GM23248 (cell line): ENCODE measurements at regions of chr2 and their contacts with region 1.

Region 1: GRCh38 chr2:42663106-42663780 is 94.8 kb downstream of the MTA3 start:
- DNase-seq: peak; percentile 83
- H3K4me3 ChIP-seq: no peak overlapping the region
- H3K27ac ChIP-seq: no peak overlapping the region
- H3K4me1 ChIP-seq: no peaks in the 10 kb centered on the region
- H3K27me3 ChIP-seq: no peaks in the 10 kb centered on the region

Region 2: GRCh38 chr2:42503291-42503690 is 160.0 kb before region 1 on chr2:
- in situ Hi-C with region 1: loop called (anchors 10 kb)
- DNase-seq: no peak
- H3K4me3 ChIP-seq: no peak overlapping the region
- H3K27ac ChIP-seq: no peak overlapping the region
- H3K4me1 ChIP-seq: no peaks in the 10 kb centered on the region
- H3K27me3 ChIP-seq: no peaks in the 10 kb centered on the region

Region 3: DNA sequence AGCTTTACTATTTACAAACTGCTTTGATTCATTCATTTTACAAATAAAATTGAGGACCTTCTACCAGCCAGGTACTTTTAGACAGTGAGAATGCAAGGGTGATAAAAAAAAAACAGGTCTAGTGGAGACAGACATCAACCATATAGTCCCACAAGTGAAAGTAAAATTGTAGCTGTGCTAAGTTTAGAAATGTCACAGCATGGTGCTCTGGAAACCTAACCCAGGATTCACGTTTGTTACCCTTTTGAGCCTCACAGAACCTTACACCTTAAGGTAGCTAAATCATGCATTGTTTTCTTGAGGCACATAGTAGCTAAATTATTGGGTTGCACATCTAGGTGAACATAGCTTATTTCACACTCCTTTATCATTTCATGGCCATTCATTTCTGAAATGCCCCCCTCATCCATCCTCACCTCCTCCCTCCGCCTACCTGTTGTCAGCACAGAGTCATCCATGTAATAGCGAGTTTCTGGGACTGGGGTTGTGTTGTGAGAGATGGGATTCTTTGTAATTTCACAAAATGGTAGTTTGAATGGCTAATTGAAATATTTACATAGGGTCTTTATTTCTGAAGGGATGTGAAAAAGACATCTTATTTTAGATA is 87.7 kb before region 1 on chr2:
- in situ Hi-C with region 1: no loop called
- DNase-seq: no peak
- H3K4me3 ChIP-seq: no peak overlapping the region
- H3K27ac ChIP-seq: no peak overlapping the region
- H3K4me1 ChIP-seq: no peaks in the 10 kb centered on the region
- H3K27me3 ChIP-seq: no peaks in the 10 kb centered on the region